ENCODE measurements at regions of chr18 and their contacts with region 1.

Region 1: GRCh38 chr18:47930931-47931717 is 665 bp upstream of the SMAD2 start:
- DNase-seq: peak; percentile 96
- H3K4me3 Mint-ChIP-seq: peak overlapping the region; percentile 76
- H3K27ac Mint-ChIP-seq: peak overlapping the region; percentile 86
- H3K4me1 Mint-ChIP-seq: peaks cover 44% of the 10 kb centered on the region
- H3K27me3 Mint-ChIP-seq: peaks cover 9% of the 10 kb centered on the region

Region 2: GRCh38 chr18:47901624-47902362 is 29.3 kb before region 1 on chr18:
- CTCF ChIA-PET with region 1: no interaction called
- POLR2A ChIA-PET with region 1: interaction called, 24 read pairs
- DNase-seq: no peak
- H3K4me3 Mint-ChIP-seq: peak overlapping the region; percentile 40
- H3K27ac Mint-ChIP-seq: peak overlapping the region; percentile 83
- H3K4me1 Mint-ChIP-seq: peaks cover 64% of the 10 kb centered on the region
- H3K27me3 Mint-ChIP-seq: no peaks in the 10 kb centered on the region

Region 3: DNA sequence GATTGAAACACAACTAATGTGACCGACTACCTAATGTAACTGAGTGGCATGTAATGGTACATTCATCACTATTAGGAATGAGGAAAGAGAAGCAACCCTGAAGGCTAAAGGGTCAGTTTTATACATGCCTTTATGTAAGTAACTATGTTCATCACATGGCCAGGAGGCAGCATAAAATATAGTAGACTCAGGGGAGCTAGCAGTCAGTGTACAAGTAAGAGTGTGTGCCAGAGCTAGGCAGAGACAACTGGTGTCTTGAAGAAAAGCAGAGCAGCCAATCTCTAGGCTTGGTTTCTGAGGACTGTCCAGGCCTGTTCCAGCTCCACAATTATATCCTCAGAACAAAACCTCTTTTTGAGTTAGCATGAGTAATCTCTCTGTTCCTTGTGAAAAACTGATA is 18.8 kb before region 1 on chr18:
- CTCF ChIA-PET with region 1: no interaction called
- POLR2A ChIA-PET with region 1: interaction called, 31 read pairs
- DNase-seq: no peak
- H3K4me3 Mint-ChIP-seq: peak overlapping the region; percentile 7
- H3K27ac Mint-ChIP-seq: peak overlapping the region; percentile 79
- H3K4me1 Mint-ChIP-seq: peaks cover 68% of the 10 kb centered on the region
- H3K27me3 Mint-ChIP-seq: no peaks in the 10 kb centered on the region

Region 4: DNA sequence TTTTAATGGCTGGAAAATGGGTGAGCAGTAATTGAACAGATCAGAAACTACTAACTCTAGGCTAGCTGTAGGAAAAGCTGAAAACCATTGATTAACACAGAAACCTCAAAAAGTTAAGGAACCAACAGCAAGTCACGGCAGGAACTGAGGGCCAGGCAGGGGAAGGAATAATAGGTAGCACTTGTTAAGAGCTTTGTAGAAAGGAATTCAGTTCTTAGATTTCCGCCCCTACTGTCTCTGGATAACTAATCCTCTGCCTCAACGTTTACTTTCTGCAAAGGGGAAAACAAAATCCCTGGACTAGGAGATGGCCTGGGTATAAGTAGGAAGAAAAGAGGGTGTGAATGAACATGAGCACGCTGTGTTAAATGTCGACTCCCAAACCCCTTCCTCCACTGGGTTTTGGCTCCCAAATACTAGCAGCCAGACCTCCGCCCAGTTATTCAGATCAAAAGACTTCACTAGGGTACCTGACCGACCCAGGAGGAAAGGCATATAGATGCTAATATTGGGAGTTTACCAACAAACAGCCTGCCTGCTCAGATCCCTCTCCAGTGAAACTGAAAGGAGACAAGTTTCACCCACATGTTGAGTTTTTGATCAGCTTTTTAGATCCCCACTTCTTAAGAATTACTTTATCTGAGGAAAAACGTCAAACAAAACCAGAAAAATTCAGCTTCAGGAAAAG is 13.1 kb before region 1 on chr18:
- CTCF ChIA-PET with region 1: interaction called, 3 read pairs
- POLR2A ChIA-PET with region 1: interaction called, 31 read pairs
- DNase-seq: no peak
- H3K4me3 Mint-ChIP-seq: peak overlapping the region; percentile 60
- H3K27ac Mint-ChIP-seq: peak overlapping the region; percentile 72
- H3K4me1 Mint-ChIP-seq: peaks cover 85% of the 10 kb centered on the region
- H3K27me3 Mint-ChIP-seq: no peaks in the 10 kb centered on the region

Region 5: DNA sequence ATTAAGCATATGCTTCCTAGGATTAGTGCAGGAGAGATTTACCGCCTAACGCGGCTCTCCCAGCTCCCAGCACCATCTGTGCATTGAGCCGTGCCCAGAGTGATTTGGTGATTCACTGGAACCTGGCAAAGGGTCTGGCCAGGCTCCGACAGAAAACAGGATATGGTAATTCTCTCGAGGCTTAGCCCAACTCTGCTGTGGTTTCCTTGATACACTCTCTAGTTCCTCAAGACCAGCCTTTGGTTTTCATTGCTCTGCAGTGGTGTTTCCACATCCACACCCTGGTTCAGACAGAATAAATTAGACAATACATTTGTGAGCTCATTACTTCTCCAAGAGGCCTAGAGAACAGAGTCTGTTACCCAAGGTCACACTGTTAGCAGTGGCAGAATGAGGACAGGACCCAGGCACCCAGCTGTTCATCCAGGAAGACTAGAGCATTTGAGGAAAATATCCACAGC is 22.4 kb after region 1 on chr18:
- CTCF ChIA-PET with region 1: no interaction called
- POLR2A ChIA-PET with region 1: interaction called, 12 read pairs
- DNase-seq: peak; percentile 65
- H3K4me3 Mint-ChIP-seq: no peak overlapping the region
- H3K27ac Mint-ChIP-seq: peak overlapping the region; percentile 86
- H3K4me1 Mint-ChIP-seq: peaks cover 16% of the 10 kb centered on the region
- H3K27me3 Mint-ChIP-seq: peaks cover 26% of the 10 kb centered on the region